Heart right ventricle (tissue), 16 donors: ENCODE measurements at regions of chr1 and their contacts with region 1.

Region 1: GRCh38 chr1:161139765-161140164 is 7.3 kb upstream of the DEDD start:
- DNase-seq: peak in 1 of 2 donors; percentile 51
- ATAC-seq: peak in 2 of 8 donors; percentile 44 to 51
- H3K4me3 ChIP-seq: no peak overlapping the region
- H3K27ac ChIP-seq: no peak overlapping the region
- H3K4me1 ChIP-seq: peaks cover 0 to 36% (median 8%) of the 10 kb centered on the region in 9 donors
- H3K27me3 ChIP-seq: no peaks in the 10 kb centered on the region
- CTCF ChIP-seq: peak in 8 of 9 donors; percentile 22 to 65 (median 61)

Region 2: DNA sequence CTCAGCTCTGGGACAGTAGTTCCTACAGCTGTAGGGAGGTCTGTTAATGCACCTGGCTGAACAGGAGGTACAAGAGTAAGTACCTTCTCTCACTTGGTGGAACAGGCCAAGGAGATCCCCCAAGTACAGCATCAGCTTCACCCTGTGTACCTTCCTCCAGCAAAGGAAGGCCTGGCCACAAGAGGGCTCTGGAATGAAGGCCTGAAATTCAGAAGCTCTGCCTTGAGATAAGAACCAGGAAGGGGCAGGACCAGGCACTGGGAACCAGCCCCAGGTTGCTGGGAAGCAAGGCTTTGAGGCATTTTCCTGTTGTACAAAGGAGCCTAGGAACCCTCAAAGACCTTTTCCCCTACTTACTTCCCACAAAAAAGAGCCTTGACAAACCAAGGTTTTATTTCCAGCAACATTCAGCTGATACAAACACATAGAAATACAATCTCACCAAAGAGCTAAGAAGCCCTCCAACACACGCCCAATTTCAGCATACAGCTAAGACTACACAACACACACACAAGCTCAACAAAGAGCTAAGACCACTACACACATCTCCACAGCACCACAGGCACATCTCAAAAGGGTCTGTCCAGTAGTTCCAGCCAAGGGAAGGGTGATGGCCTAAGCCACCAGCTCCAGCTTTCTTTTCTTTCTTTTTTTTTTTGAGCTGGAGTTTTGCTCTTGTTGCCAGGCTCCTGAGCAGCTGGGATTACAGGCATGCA is 142.3 kb before region 1 on chr1:
- intact Hi-C with region 1: loop called in 6 of 10 experiments (anchors 5 to 10 kb)
- DNase-seq: peak; percentile 45 to 83
- ATAC-seq: peak; percentile 89 to 95 (median 92)
- H3K4me3 ChIP-seq: no peak overlapping the region
- H3K27ac ChIP-seq: peak overlapping the region in 9 of 10 donors; percentile 47 to 82 (median 75)
- H3K4me1 ChIP-seq: peaks cover 0 to 30% (median 12%) of the 10 kb centered on the region in 9 donors
- H3K27me3 ChIP-seq: no peaks in the 10 kb centered on the region
- CTCF ChIP-seq: peak; percentile 43 to 83 (median 68)